ENCODE measurements at regions of chr12 and their contacts with region 1.

Region 1: DNA sequence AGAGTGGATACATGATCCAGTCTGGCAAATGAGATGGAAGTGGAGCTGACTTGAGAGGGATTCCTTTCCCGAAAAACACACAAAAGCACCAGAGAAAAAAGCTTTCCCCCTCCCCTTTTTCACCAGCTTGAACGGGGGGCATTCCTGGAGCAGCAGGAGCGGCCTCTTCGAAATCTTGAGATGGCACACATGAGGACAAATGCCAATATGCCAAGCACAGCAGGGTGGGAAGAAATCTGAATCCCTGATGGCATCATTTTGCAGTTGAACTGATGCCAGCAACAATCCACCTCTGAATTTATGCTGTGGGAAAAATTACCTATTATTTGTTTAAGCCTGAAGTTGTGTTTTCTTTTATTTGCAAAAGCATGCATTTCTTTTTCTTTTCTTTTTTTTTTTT is 29.7 kb upstream of the BICD1 start:
- DNase-seq: no peak
- H3K27ac ChIP-seq: no peak overlapping the region
- CTCF ChIP-seq: no peak

Region 2: DNA sequence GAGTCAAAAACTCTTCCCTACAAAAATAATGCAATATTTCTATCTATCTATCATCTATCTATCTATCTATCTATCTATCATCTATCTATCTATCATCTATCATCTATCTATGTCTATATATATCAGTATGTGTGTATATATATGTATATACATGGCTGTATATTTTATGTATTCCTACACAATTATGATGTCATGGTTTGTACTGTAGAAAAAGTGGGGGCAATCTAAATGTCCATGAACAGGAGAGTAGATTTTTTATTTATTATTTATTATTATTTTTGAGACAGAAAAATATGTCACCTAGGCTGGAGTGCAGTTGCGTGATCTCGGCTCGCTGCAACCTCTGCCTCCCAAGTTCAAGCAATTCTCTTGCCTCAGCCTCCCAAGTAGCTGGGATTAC is 15.9 kb before region 1 on chr12:
- CTCF ChIA-PET with region 1: interaction called, 11 read pairs
- POLR2A ChIA-PET with region 1: no interaction called
- DNase-seq: no peak
- H3K27ac ChIP-seq: no peak overlapping the region
- CTCF ChIP-seq: no peak

Region 3: GRCh38 chr12:32126720-32127119 is 49.8 kb after region 1 on chr12:
- CTCF ChIA-PET with region 1: no interaction called
- POLR2A ChIA-PET with region 1: no interaction called
- DNase-seq: no peak
- H3K27ac ChIP-seq: no peak overlapping the region
- CTCF ChIP-seq: no peak